Right ventricle myocardium inferior (tissue), 1 donor: ENCODE measurements at regions of chr1 and their contacts with region 1.

Region 1: DNA sequence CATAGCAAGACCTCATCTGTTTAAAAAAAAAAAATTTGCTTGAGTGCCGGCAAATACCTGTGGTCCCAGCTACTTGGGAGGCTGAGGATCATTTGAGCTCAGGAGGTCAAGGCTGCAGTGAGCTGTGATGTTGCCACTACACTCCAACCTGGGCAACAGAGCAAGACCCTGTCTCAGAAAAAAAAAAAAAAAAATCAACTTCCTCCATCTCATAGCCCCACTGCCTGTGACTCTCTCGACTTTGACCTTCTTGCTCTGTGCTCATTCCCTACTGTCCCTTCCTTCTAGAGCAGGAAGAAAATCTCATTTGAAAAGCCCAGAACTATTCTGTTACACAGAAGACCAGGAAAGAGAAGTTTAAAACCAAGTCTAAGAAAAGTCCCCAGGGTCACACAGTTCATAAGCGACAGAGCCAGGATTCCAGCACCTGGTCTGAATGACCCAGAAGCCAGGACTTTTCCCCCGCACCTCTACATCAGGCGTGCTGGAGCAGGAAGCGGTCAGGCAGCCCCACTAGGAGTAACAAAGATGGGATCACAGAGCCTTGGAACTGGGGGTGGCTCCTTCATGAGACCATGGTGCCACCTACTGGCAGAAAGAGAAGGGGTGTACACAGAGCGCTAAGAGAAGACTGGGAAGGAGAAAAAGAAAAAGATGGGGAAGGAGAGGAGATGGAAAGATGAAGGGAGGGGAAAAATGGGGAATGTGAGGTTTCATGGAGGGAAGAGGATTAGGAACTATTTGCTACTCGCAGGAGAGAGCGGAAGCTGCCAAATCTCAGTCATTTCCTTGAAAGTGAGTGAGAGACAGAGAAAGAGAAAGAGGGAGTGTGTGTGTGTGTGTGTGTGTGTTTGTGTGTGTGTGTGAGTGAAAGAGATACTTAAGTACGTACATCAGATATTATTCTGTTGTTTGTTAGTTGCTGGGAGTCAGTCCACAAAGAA is 3.1 kb upstream of the P3R3URF start:
- DNase-seq: peak; percentile 75
- ATAC-seq: peak; percentile 83

Region 2: DNA sequence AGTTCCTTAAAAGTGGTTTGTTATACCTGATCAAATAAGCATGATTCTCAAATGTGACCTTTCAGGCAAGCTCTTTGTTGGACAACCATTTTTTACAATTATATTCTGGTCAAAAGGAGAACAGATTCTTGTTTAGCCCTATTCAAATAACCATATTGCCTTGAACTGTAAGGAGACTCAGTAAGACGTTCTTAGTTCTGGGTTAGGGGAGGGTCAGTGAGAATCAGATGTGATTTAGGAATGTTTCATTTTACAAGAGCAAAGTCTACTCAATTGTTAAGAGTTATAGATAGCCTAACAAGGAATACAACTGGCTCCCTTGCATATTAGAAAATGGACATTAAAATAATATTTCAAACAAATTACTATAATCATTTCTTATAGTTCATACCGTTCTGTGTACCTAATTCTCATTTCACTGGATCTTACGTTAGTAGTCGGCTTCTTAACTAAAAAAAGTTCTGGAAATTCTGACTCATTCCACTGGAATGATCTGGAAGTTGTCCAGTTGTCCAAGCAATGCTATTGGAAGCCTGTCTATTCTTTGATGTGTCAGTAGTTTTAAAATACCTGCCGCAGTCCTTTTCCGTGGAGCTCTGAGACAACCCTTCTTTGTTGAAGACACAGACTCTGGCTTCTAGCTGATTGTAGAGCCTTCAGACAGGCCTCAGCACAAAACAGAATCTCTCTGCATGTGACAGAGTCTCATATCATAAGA is 287.2 kb before region 1 on chr1:
- intact Hi-C with region 1: loop called (anchors 10 kb)
- DNase-seq: no peak
- ATAC-seq: peak; percentile 74

Region 3: DNA sequence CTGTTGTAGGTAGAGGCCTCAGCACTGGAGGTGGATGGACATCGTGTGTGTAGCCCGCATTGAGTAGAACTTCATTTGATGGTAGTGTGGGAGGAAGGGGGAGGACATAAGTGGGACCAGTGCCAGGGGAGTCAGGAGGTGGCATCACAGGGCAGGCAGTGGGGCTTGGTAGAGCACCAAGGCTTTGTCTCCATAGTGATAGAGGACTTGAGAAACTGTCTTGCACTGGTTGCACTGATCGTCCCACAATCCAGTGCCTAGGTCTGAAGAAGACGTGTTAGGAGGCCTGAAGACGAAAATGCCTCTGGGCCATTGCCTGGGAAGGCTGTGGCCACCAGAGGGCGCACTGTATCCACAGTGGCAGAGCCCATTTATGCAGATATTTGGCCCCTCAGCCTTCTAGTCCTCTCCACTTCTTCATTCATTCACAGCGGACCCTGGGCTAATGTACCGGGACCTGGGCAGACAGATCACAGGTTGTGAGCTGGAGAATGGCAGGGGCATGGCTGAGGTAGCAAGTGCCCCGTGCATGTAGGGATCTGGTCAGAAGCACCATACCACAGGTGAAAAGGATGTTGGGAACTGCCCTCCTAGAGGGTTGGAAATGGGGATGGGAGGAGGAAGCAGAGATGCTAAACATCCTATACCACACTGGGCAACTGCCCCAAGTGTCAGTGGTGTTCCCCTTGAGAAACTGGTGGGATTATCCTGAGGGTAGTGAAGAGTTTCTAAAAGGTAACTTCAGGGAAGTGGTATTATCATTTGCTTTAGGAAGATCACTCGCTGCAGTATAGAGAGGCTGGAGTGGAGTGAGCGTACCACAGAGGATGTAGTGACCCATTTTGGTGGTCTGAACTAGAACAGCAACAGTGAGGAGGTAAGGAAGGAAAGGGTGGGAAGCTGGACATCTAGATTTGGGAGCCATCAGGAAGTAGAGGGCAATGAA is 142.2 kb before region 1 on chr1:
- intact Hi-C with region 1: loop called (anchors 1 kb)
- DNase-seq: peak; percentile 87
- ATAC-seq: peak; percentile 68

Region 4: GRCh38 chr1:46132529-46133180 is 46.8 kb before region 1 on chr1 and contains the start of gene PIK3R3:
- intact Hi-C with region 1: loop called (anchors 1 kb)
- DNase-seq: peak; percentile 98
- ATAC-seq: peak; percentile 98
- total RNA-seq, gene PIK3R3: 22.6 TPM

Region 5: DNA sequence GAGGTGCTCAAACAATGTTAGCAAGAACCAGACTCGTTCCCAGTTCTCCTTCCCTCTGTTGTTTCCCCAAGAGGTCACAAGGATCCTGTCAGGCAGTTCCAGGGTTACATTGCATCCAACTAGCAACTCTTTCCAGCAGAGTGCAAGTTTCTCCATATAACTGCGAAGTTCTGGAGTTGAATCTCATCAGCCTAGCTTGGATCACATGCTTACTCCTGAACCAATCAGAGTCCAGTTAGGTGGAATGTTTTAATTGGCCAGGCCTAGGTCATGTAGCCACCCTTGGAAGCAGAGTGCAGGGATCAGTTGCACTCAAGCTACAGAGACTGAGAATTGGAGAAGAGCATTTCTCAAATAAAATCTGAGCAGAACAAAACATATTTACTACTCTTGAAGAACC is 31.1 kb before region 1 on chr1:
- intact Hi-C with region 1: no loop called
- DNase-seq: no peak
- ATAC-seq: no peak

Region 6: GRCh38 chr1:46223472-46223943 is 44.1 kb after region 1 on chr1:
- intact Hi-C with region 1: loop called (anchors 1 kb)
- DNase-seq: peak; percentile 81
- ATAC-seq: peak; percentile 87